ENCODE measurements at regions of chr12 and their contacts with region 1.

Region 1: GRCh38 chr12:94101738-94102660 is 46.4 kb upstream of the PLXNC1 start:
- DNase-seq: peak; percentile 39 to 94
- H3K4me3 ChIP-seq: peak overlapping the region; percentile 63 to 67
- H3K27ac ChIP-seq: peak overlapping the region; percentile 1 to 47
- H3K4me1 ChIP-seq: peaks cover 0 to 4% of the 10 kb centered on the region in 2 donors
- H3K27me3 ChIP-seq: no peaks in the 10 kb centered on the region
- CTCF ChIP-seq: peak; percentile 71 to 87 (median 71)

Region 2: DNA sequence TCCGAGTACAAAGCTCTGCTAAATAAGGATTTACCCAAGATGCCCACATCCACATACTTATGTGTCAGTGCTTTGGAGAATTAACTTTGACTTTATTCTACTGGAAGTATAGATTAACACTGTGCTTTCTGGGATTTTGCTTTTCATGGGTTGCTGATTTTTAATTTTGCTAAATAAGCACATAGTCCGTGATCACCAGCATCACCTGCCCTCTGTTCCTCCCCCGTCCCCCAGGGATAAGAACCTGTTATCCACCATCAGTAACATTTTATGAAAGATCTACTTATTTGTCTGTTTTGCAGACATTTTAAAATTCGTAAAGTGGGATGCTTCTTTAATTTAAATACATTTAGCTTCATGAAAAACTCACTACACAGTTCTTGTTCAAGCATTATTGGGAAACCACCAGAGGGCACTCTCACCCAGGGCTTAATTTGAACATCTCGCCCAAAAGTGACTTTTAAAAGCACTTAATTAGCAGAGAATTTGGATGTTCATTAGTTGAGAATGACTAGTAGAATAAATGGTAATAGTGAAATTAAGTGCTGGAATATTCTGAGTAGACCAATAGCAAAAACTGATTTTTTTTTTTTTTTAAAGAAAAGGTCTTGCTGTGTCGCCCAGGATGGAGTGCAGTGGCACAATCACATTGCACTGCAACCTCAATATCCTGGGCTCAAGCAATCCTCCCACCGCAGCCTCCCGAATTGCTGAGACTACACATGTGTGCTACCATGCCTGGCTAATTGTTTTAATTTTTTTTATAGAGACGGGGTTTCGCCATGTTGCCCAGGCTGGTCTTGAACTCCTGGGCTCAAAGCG is 599.0 kb before region 1 on chr12:
- intact Hi-C with region 1: loop called (anchors 1 kb)
- DNase-seq: peak in 1 of 2 donors; percentile 67
- H3K4me3 ChIP-seq: no peak overlapping the region
- H3K27ac ChIP-seq: no peak overlapping the region
- H3K4me1 ChIP-seq: no peaks in the 10 kb centered on the region
- H3K27me3 ChIP-seq: no peaks in the 10 kb centered on the region
- CTCF ChIP-seq: peak; percentile 57 to 81 (median 75)

Region 3: GRCh38 chr12:93742110-93742934 is 359.7 kb before region 1 on chr12:
- intact Hi-C with region 1: loop called (anchors 1 kb)
- DNase-seq: peak in 1 of 2 donors; percentile 90
- H3K4me3 ChIP-seq: peak overlapping the region; percentile 61 to 76
- H3K27ac ChIP-seq: peak overlapping the region; percentile 90 to 93
- H3K4me1 ChIP-seq: peaks cover 2 to 18% of the 10 kb centered on the region in 2 donors
- H3K27me3 ChIP-seq: no peaks in the 10 kb centered on the region
- CTCF ChIP-seq: peak; percentile 17 to 62 (median 39)

Region 4: GRCh38 chr12:93825931-93826555 is 276.0 kb before region 1 on chr12:
- intact Hi-C with region 1: loop called (anchors 5 kb)
- DNase-seq: no peak
- H3K4me3 ChIP-seq: no peak overlapping the region
- H3K27ac ChIP-seq: peak overlapping the region; percentile 43 to 64
- H3K4me1 ChIP-seq: peaks cover 0 to 16% of the 10 kb centered on the region in 2 donors
- H3K27me3 ChIP-seq: no peaks in the 10 kb centered on the region
- CTCF ChIP-seq: no peak

Region 5: GRCh38 chr12:93943766-93944165 is 158.2 kb before region 1 on chr12:
- intact Hi-C with region 1: no loop called
- DNase-seq: peak in 1 of 2 donors; percentile 76
- H3K4me3 ChIP-seq: no peak overlapping the region
- H3K27ac ChIP-seq: no peak overlapping the region
- H3K4me1 ChIP-seq: peaks cover 0 to 4% of the 10 kb centered on the region in 2 donors
- H3K27me3 ChIP-seq: no peaks in the 10 kb centered on the region
- CTCF ChIP-seq: no peak

Region 6: GRCh38 chr12:93990832-93991803 is 110.9 kb before region 1 on chr12:
- intact Hi-C with region 1: loop called (anchors 5 kb)
- DNase-seq: no peak
- H3K4me3 ChIP-seq: no peak overlapping the region
- H3K27ac ChIP-seq: peak overlapping the region; percentile 1 to 18
- H3K4me1 ChIP-seq: peaks cover 0 to 3% of the 10 kb centered on the region in 2 donors
- H3K27me3 ChIP-seq: no peaks in the 10 kb centered on the region
- CTCF ChIP-seq: peak in 2 of 3 experiments; percentile 5 to 31

Region 7: DNA sequence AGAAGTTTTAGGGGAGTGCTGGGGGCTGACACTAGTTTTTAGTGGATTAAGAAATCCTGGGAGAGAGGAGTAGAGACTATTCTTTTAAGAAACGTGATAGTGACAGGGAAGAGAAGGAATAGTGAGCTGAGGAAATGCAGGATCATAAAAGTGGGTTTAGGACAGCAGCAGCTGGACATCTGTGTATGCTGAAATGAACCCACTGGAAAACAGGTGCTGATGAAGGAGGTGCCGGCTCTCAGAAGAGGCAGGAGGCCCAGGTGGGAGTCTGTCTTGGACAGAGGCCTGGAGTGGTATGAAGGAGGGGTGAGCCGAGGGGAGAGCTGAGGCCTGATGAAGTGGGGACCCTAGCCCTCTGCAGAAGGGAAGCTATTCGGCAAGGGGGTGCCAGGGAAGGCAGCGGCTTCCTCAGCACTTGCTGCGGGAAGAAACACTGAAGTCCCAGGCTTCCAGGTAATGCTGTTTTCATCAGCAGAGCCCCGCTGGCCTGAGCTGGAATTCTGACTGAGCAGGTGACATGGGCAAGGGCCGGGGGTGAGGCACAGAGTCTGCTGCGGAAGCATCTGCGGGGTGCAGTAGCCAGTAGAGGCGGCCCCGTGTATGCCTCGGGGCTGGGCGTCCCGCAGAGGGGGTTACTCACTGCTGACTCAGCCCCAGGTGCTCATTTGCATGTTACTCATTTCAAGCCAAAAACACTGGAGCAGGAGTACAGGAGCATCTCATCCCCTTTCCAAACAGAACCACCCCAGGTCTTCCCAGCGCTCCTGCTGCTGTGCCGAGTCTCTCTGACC is 458.6 kb after region 1 on chr12:
- intact Hi-C with region 1: no loop called
- DNase-seq: no peak
- H3K4me3 ChIP-seq: no peak overlapping the region
- H3K27ac ChIP-seq: no peak overlapping the region
- H3K4me1 ChIP-seq: no peaks in the 10 kb centered on the region
- H3K27me3 ChIP-seq: no peaks in the 10 kb centered on the region
- CTCF ChIP-seq: no peak

Measured in ascending aorta (tissue), 2 donors.